ENCODE measurements at regions of chr20 and their contacts with region 1.

Region 1: GRCh38 chr20:22846863-22847262 is 188.2 kb upstream of the SSTR4 start:
- DNase-seq: no peak
- H3K4me3 ChIP-seq: no peak overlapping the region
- H3K4me3 Mint-ChIP-seq: no peak overlapping the region
- H3K27ac Mint-ChIP-seq: no peak overlapping the region
- H3K4me1 ChIP-seq: no peaks in the 10 kb centered on the region
- H3K4me1 Mint-ChIP-seq: no peaks in the 10 kb centered on the region
- H3K27me3 ChIP-seq: no peaks in the 10 kb centered on the region
- H3K27me3 Mint-ChIP-seq: no peaks in the 10 kb centered on the region
- CTCF ChIP-seq: no peak

Region 2: GRCh38 chr20:22801528-22801927 is 45.3 kb before region 1 on chr20:
- CTCF ChIA-PET with region 1: no interaction called
- POLR2A ChIA-PET with region 1: no interaction called
- intact Hi-C with region 1: no loop called
- DNase-seq: no peak
- H3K4me3 ChIP-seq: no peak overlapping the region
- H3K4me3 Mint-ChIP-seq: no peak overlapping the region
- H3K27ac Mint-ChIP-seq: no peak overlapping the region
- H3K4me1 ChIP-seq: peaks cover 33% of the 10 kb centered on the region
- H3K4me1 Mint-ChIP-seq: peaks cover 24% of the 10 kb centered on the region
- H3K27me3 ChIP-seq: no peaks in the 10 kb centered on the region
- H3K27me3 Mint-ChIP-seq: no peaks in the 10 kb centered on the region
- CTCF ChIP-seq: no peak

Region 3: DNA sequence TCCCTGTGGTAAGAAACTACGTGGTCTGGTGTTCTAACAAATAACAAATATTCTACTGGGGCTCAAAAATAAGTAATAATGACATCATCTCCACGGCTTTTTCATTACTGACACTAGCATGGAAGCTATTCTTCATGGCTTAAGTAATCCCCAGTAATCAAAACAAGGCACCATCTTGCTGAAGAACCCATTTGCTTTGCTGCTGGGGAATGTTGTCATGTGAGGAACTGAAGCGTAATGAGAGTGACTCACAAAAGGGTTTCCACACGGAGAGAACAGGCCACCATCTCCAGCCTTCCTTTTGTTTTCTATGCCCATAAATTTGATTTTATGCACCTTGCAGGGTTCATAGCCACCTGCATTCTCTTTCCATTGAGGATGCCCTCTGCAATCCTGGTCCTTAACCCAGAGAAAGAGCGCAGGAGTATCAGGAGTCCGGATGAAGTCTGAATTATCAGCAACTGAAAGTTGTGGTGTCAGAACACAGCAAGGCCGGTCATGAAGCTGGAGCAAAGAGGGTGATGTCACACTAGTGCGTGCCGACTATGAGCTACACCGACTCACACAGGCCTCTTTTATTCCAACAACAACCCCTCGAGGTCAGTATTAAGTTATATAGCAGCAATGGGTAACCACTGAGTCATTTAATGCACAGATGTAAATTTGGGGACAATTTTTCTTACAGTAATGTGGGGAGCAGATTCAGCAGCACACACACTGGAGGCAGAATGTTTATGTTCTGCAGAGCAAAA is 14.5 kb after region 1 on chr20:
- CTCF ChIA-PET with region 1: no interaction called
- POLR2A ChIA-PET with region 1: no interaction called
- intact Hi-C with region 1: no loop called
- DNase-seq: no peak
- H3K4me3 ChIP-seq: no peak overlapping the region
- H3K4me3 Mint-ChIP-seq: no peak overlapping the region
- H3K27ac Mint-ChIP-seq: no peak overlapping the region
- H3K4me1 ChIP-seq: no peaks in the 10 kb centered on the region
- H3K4me1 Mint-ChIP-seq: no peaks in the 10 kb centered on the region
- H3K27me3 ChIP-seq: no peaks in the 10 kb centered on the region
- H3K27me3 Mint-ChIP-seq: no peaks in the 10 kb centered on the region
- CTCF ChIP-seq: no peak

Region 4: DNA sequence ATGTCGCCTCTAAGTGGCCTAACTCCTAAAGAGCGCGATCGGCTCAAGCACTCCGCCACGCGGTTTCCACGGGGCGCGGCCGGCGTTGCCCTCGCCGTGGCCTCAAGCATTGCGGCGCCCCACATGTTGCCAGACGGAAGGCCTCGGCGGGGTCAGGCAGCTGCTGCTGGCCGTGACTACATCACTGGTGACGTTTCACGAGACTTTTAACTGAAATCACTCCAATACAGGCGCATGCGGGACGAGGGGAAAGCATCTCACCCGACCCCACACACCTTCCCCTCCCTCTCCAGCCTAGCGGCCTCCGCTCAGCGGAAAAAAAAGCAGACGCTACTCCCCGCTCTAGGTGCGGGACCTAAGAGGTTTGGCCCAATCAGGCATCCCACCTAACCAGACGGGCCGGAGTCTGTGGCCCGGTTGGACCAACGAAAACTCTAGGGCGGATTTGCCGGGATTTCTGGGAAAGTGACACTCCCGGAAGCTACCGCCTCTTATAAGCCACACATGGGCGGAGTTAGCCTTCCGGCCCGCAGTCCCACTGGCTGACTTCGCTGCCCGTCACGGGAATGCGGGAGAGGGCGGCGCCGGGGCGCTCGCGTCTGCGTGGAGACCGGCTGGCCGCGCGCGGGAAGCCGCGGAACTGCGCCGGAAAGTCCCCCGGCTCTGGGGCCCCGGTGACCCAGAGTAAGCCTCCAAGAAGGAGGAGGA is 503.5 kb after region 1 on chr20 and contains the start of gene NXT1:
- CTCF ChIA-PET with region 1: interaction called, 10 read pairs
- POLR2A ChIA-PET with region 1: no interaction called
- intact Hi-C with region 1: no loop called
- DNase-seq: peak; percentile 98 to 99
- H3K4me3 ChIP-seq: peak within 1 kb of the TSS; percentile 98
- H3K4me3 Mint-ChIP-seq: peak within 1 kb of the TSS; percentile 89
- H3K27ac Mint-ChIP-seq: peak within 1 kb of the TSS; percentile 100
- H3K4me1 ChIP-seq: peaks cover 17% of the 10 kb centered on the region
- H3K4me1 Mint-ChIP-seq: peaks cover 16% of the 10 kb centered on the region
- H3K27me3 ChIP-seq: no peaks in the 10 kb centered on the region
- H3K27me3 Mint-ChIP-seq: no peaks in the 10 kb centered on the region
- CTCF ChIP-seq: no peak
- total RNA-seq, gene NXT1: 33.6 and 34.1 TPM in 2 replicates

Measured in Caco-2 (cell line).